Ovary (tissue), 10 donors: ENCODE measurements at regions of chr16 and their contacts with region 1.

Region 1: DNA sequence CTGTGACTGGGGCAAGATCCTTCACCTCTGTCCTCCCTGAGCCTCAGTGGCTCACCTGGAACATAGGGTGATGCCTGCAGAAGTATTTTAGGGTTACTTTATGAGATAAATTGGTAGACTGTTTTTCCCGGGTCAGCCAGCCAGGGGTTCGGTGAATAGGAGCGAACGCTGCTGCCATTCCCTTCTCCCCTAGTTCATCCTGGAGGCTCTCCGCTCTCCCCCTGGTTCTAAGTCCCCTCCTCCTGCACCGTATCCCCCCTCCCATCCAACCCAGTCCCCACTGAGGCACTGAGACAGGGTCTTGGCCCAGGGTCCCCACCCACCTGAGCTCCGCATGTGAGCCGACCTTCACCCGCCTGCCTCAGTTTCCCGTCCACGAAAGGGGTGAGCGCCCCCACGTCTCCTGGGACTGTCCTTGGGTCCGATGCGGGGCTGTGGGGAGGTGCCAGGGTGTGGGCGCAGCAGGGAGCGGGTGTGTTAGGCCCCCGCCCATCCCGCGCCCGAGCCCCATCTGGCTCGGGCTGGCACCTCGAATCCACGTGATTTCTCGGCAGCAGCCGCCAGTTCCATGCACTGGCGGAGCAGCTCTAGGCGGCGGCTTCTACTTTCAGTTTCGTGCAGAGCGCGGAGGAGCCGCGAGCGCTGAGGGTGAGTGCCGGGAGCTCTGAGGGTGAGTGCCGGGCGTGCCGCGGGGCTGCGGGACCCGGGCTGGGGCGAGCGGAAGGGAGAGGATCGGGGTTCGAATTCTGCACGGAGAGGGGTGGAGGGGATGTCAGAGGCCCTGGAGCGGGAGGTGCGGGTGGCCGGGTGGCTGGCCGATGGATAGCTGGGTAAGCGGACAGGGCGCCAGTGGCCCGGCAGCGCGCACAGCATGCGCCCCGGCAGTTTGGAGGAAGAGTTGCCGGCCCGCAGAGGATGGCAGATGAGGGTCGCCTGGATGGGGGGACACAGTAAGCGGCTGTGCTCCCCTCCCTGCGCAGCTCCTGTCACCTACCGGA is at the start of gene NLRC5:
- DNase-seq: peak; percentile 82 to 86 (median 84)
- H3K4me3 ChIP-seq: peak within 1 kb of the TSS; percentile 65
- H3K27ac ChIP-seq: peak within 1 kb of the TSS; percentile 73 to 86
- H3K4me1 ChIP-seq: peaks cover 17% of the 10 kb centered on the region
- H3K27me3 ChIP-seq: no peaks in the 10 kb centered on the region
- CTCF ChIP-seq: no peak
- EP300 ChIP-seq: peak; percentile 19
- POLR2A ChIP-seq: peak; percentile 54
- total RNA-seq, gene NLRC5: 6.0 to 29.9 (median 14.7) TPM

Region 2: GRCh38 chr16:56191156-56191815 is 798.0 kb before region 1 on chr16 and contains the start of gene GNAO1:
- intact Hi-C with region 1: loop called in 1 of 4 experiments (anchors 5 kb)
- DNase-seq: peak; percentile 71 to 88 (median 83)
- H3K4me3 ChIP-seq: peak within 1 kb of the TSS; percentile 73
- H3K27ac ChIP-seq: peak within 1 kb of the TSS; percentile 79 to 87
- H3K4me1 ChIP-seq: peaks cover 8% of the 10 kb centered on the region
- H3K27me3 ChIP-seq: no peaks in the 10 kb centered on the region
- CTCF ChIP-seq: no peak
- EP300 ChIP-seq: no peak
- POLR2A ChIP-seq: no peak
- total RNA-seq, gene GNAO1: 0.72 to 5.6 (median 2.7) TPM

Region 3: GRCh38 chr16:56569801-56570370 is 419.4 kb before region 1 on chr16:
- intact Hi-C with region 1: no loop called
- DNase-seq: no peak
- H3K4me3 ChIP-seq: no peak overlapping the region
- H3K27ac ChIP-seq: no peak overlapping the region
- H3K4me1 ChIP-seq: no peaks in the 10 kb centered on the region
- H3K27me3 ChIP-seq: no peaks in the 10 kb centered on the region
- CTCF ChIP-seq: no peak
- EP300 ChIP-seq: no peak
- POLR2A ChIP-seq: no peak

Region 4: GRCh38 chr16:56944954-56945839 is 44.0 kb before region 1 on chr16:
- intact Hi-C with region 1: no loop called
- DNase-seq: peak; percentile 39 to 78 (median 60)
- H3K4me3 ChIP-seq: no peak overlapping the region
- H3K27ac ChIP-seq: peak overlapping the region in 1 of 2 donors; percentile 43
- H3K4me1 ChIP-seq: peaks cover 8% of the 10 kb centered on the region
- H3K27me3 ChIP-seq: no peaks in the 10 kb centered on the region
- CTCF ChIP-seq: no peak
- EP300 ChIP-seq: no peak
- POLR2A ChIP-seq: no peak

Region 5: DNA sequence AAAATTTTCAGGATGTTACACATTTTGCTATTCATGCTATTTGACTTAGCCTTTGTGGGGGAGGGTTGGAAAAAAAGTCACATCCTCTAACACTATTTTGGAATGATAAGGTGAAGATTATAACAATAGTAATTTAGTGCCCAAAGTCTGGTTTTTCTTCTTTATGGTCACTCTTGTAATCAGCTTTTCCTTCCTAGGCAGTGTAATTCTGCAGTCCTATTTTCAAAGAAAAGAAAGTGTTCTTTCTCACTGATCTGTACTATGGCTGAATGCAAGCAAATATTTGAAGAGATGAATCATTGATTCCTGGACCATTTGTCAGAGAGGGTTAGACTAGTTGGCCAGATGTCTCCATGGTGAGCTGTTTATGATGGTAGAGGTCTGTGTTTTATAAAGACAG is 205.3 kb after region 1 on chr16:
- intact Hi-C with region 1: no loop called
- DNase-seq: no peak
- H3K4me3 ChIP-seq: no peak overlapping the region
- H3K27ac ChIP-seq: no peak overlapping the region
- H3K4me1 ChIP-seq: peaks cover 6% of the 10 kb centered on the region
- H3K27me3 ChIP-seq: no peaks in the 10 kb centered on the region
- CTCF ChIP-seq: no peak
- EP300 ChIP-seq: no peak
- POLR2A ChIP-seq: no peak

Region 6: DNA sequence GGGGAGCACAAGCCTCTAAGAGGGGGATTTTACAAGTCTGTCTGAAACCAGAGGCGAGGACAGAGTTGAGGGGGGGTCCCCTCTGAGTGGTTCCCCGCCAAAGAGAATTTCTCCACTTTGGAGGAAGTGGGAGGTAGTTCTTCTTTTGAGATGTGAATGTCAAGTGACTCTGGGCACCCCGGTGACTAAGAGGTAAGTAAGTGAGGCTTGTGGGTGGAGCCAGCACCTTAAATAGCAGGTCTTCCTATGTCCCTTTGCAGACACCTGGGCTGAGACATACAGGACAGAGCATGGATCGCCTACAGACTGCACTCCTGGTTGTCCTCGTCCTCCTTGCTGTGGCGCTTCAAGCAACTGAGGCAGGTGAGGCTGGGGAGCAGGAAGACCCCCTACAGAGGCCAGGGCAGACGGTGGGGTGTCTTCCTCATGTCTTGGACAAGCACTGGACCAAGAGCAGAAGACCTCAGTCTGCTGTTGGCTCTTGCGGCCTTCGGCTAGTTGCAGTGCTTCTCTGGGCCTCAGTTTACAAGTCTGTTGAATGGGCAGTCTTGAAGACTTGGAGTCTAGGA is 369.4 kb after region 1 on chr16 and contains the start of gene CCL22:
- intact Hi-C with region 1: no loop called
- DNase-seq: no peak
- H3K4me3 ChIP-seq: no peak within 1 kb of the TSS
- H3K27ac ChIP-seq: no peak within 1 kb of the TSS
- H3K4me1 ChIP-seq: no peaks in the 10 kb centered on the region
- H3K27me3 ChIP-seq: no peaks in the 10 kb centered on the region
- CTCF ChIP-seq: no peak
- EP300 ChIP-seq: no peak
- POLR2A ChIP-seq: no peak
- total RNA-seq, gene CCL22: 0.74 TPM in 1 of 7 donors, not detected in the others